ENCODE measurements at regions of chr3 and their contacts with region 1.

Region 1: DNA sequence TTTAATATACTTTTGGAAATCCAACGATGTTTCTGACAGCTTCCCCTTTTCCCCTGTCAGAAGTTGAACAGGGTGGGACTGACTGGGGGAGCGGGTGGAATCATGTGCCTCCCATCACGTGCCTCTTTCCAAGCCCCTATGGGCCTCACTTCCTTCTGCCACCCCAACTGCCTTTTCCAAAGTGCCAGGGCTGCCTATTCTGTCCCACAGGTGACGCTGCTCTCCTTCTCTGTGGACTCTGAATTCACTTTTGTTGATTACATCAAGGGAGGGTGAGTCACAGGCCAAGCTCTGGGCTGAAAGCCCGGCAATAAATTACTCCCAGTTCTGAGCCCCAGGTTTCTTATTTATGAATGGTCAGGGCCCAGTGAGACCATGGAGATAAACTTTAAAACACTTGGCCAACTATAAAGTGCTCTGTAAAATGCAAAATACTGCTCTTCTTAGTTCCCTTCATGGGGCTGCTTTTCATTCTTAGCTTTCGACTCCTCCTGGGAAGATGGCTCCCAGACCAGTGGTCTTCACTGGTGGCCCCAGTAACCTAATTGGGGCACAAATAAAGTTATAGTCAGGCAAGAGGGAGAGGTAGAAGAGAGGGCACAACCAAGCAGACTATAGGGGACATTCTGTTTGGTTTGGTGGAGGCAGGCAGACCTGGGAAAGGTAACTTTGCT is 12.3 kb downstream of the CPNE9 start:
- DNase-seq: peak; percentile 90
- ATAC-seq: peak; percentile 98
- H3K4me3 ChIP-seq: no peak overlapping the region
- H3K27ac ChIP-seq: no peak overlapping the region
- H3K4me1 ChIP-seq: peaks cover 2% of the 10 kb centered on the region; the same call in 1 of the 2 replicates
- H3K27me3 ChIP-seq: peaks cover 23% of the 10 kb centered on the region
- CTCF ChIP-seq: peak; percentile 97
- POLR2A ChIP-seq: no peak
- RAD21 ChIP-seq: peak; percentile 98

Region 2: GRCh38 chr3:9915254-9916141 is 199.6 kb after region 1 on chr3:
- CTCF ChIA-PET with region 1: interaction called, 3 read pairs
- POLR2A ChIA-PET with region 1: no interaction called
- dilution Hi-C with region 1: no loop called
- in situ Hi-C with region 1: no loop called
- intact Hi-C with region 1: loop called (anchors 5 kb)
- DNase-seq: peak; percentile 52
- ATAC-seq: peak; percentile 62
- H3K4me3 ChIP-seq: peak overlapping the region; percentile 46
- H3K27ac ChIP-seq: peak overlapping the region; percentile 89
- H3K4me1 ChIP-seq: peaks cover 32% of the 10 kb centered on the region
- H3K27me3 ChIP-seq: no peaks in the 10 kb centered on the region
- CTCF ChIP-seq: peak; percentile 53
- POLR2A ChIP-seq: no peak
- RAD21 ChIP-seq: peak; percentile 60

Measured in IMR-90 (cell line).